A549 (cell line): ENCODE measurements at regions of chr11 and their contacts with region 1.

Region 1: DNA sequence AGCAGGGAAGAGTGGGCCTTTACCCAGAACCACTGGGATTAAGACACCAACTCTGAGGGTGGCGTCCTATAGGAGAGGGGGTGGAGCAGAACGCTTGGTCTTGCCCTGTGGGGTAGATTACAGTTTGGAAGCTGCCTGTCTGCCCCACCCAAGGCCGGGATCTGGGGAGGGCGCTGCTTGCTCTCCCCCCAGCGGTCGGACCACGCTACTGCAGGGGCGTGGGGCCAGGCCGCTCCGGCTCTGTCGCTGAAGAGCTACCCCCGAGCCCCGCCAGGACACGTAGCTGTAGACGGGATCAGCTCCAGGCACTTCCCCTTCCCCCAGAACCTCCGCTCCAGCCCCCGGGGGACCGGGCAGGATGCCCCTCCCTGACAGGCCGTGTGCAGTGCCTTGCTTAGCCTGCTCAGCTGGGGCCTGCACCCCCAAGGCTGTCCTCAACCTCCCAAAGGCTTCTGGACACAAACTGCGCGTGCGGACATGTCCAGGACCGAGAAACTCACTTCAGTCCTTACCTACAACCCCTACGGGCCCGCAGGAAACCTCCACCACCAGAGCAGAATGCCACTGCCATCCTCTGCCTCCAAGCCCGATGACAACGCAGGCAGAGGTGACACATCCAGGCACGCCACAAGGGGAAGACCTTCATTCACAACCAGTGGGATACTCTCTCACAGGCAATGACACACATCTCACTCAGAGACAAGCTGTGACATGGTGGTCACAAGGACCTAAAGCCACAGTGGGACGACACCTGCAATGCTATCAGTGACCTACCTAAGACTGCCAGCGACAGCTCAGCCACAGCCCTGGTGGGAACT is 3.6 kb downstream of the AHNAK start:
- DNase-seq: peak; percentile 72 to 82
- ATAC-seq: peak; percentile 11 to 46; a peak in 5 of 6 replicates
- H3K4me3 ChIP-seq: peak overlapping the region; percentile 96
- H3K27ac ChIP-seq: peak overlapping the region; percentile 97 to 98
- H3K4me1 ChIP-seq: peaks cover 75% of the 10 kb centered on the region
- CTCF ChIP-seq: peak; percentile 87
- EP300 ChIP-seq: no peak
- POLR2A ChIP-seq: no peak
- RAD21 ChIP-seq: peak; percentile 92 to 95

Region 2: GRCh38 chr11:62315431-62315830 is 227.5 kb before region 1 on chr11:
- CTCF ChIA-PET with region 1: no interaction called
- POLR2A ChIA-PET with region 1: no interaction called
- DNase-seq: no peak
- ATAC-seq: no peak
- H3K4me3 ChIP-seq: no peak overlapping the region
- H3K27ac ChIP-seq: no peak overlapping the region
- H3K4me1 ChIP-seq: no peaks in the 10 kb centered on the region
- CTCF ChIP-seq: no peak
- EP300 ChIP-seq: no peak
- POLR2A ChIP-seq: no peak
- RAD21 ChIP-seq: no peak

Region 3: GRCh38 chr11:62435846-62436660 is 106.9 kb before region 1 on chr11:
- CTCF ChIA-PET with region 1: interaction called, 14 read pairs
- POLR2A ChIA-PET with region 1: no interaction called
- DNase-seq: no peak
- ATAC-seq: no peak
- H3K4me3 ChIP-seq: no peak overlapping the region
- H3K27ac ChIP-seq: no peak overlapping the region
- H3K4me1 ChIP-seq: peaks cover 33% of the 10 kb centered on the region
- CTCF ChIP-seq: no peak
- EP300 ChIP-seq: no peak
- POLR2A ChIP-seq: no peak
- RAD21 ChIP-seq: no peak

Region 4: GRCh38 chr11:62461740-62462507 is 81.0 kb before region 1 on chr11:
- CTCF ChIA-PET with region 1: interaction called, 22 read pairs
- POLR2A ChIA-PET with region 1: no interaction called
- DNase-seq: peak in 1 of 2 experiments; percentile 38
- ATAC-seq: peak; percentile 23 to 44; a peak in 3 of 6 replicates
- H3K4me3 ChIP-seq: no peak overlapping the region
- H3K27ac ChIP-seq: peak overlapping the region in 1 of 2 experiments; percentile 43; a peak in 3 of 6 replicates
- H3K4me1 ChIP-seq: peaks cover 27% of the 10 kb centered on the region
- CTCF ChIP-seq: no peak
- EP300 ChIP-seq: no peak
- POLR2A ChIP-seq: no peak
- RAD21 ChIP-seq: no peak

Region 5: DNA sequence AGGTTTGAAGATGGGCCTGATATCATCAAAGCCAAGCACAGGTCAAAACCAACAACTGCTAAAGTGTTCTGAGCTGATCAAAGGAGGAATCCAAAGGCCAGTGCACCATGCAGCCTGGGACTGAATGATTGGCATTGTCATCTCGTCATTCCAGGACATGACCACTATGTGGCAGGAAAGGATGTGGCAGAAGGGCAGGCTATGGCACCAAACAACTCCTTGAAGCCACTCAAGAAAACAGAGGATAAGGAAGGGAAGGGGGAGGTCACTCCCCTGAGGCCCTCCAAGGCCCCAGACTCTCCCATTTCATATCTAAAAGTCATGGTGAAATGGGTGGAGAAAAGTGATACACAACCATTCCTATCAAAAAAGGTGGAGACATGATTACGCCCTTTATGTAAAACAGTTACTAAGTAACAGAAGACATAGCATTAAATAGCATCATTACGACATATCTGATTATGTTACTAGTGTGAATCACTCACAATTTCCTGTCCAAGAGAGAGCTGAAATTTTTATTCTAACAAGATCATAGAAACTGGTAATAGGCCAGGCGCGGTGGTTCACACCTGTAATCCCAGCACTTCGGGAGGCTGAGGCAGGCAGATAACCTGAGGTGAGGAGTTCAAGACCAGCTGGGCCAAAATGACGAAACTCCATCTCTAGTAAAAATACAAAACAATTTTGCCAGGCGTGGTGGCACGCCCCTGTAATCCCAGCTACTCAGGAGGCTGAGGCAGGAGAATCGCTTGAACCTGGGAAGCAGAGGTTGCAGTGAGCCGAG is 45.6 kb before region 1 on chr11:
- CTCF ChIA-PET with region 1: interaction called, 143 read pairs
- POLR2A ChIA-PET with region 1: interaction called, 4 read pairs
- DNase-seq: peak; percentile 75 to 85
- ATAC-seq: peak; percentile 91 to 96
- H3K4me3 ChIP-seq: no peak overlapping the region
- H3K27ac ChIP-seq: peak overlapping the region; percentile 21 to 65; a peak in 4 of 6 replicates
- H3K4me1 ChIP-seq: peaks cover 29% of the 10 kb centered on the region
- CTCF ChIP-seq: peak; percentile 71
- EP300 ChIP-seq: no peak
- POLR2A ChIP-seq: no peak
- RAD21 ChIP-seq: peak; percentile 82 to 84

Region 6: DNA sequence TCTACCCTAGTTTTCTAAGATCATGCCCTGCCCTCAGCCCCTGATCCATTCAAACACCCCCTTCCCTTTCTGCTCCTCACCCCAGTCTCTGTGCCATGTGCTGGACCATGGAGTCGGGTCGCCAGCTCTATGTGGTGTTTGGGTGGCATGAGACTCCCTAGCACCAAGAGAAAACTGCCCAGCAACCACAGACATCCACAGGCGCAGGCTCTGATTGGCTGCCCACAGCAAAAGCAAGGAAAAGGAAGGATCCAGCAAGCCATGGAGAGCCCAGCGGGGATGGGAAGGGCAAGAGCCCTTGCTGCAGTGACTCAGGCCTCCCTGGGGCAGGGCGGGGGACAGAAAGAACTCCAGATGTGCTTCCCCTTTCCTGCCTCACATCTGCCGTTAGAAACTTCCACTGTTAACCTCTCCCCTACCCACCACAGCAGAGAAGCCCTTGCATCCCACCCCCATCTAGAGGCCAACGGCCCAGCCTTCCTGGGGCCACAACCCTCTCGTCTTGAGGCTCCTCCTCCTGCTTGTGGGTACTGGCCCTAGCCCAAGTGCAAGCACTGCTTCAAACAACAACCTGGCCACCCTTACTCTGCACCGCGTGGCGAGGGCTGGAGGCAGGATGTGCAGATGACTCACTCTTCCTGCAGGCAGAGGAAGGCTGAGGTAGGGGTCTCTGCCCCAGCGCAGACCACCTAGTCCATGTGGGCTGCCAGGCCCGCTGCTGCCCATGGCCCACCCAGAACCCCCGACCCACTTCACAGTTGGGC is 13.3 kb after region 1 on chr11:
- CTCF ChIA-PET with region 1: interaction called, 296 read pairs
- POLR2A ChIA-PET with region 1: interaction called, 6 read pairs
- DNase-seq: peak; percentile 95 to 99
- ATAC-seq: peak; percentile 55 to 76
- H3K4me3 ChIP-seq: peak overlapping the region; percentile 4; the same call in 1 of the 3 replicates
- H3K27ac ChIP-seq: peak overlapping the region; percentile 90 to 94
- H3K4me1 ChIP-seq: peaks cover 96% of the 10 kb centered on the region
- CTCF ChIP-seq: no peak
- EP300 ChIP-seq: no peak
- POLR2A ChIP-seq: no peak
- RAD21 ChIP-seq: peak in 1 of 2 experiments; percentile 10; a peak in 1 of 5 replicates

Region 7: GRCh38 chr11:62678770-62679696 is 136.1 kb after region 1 on chr11 and contains the start of gene UBXN1:
- CTCF ChIA-PET with region 1: no interaction called
- POLR2A ChIA-PET with region 1: no interaction called
- DNase-seq: peak; percentile 87 to 92
- ATAC-seq: peak; percentile 84 to 86
- H3K4me3 ChIP-seq: peak within 1 kb of the TSS; percentile 67
- H3K27ac ChIP-seq: peak within 1 kb of the TSS; percentile 87 to 92
- H3K4me1 ChIP-seq: peaks cover 24% of the 10 kb centered on the region
- CTCF ChIP-seq: no peak
- EP300 ChIP-seq: no peak
- POLR2A ChIP-seq: peak; percentile 57
- RAD21 ChIP-seq: no peak
- polyA plus RNA-seq, gene UBXN1: 56.8 and 120 TPM in 2 replicates

Region 8: DNA sequence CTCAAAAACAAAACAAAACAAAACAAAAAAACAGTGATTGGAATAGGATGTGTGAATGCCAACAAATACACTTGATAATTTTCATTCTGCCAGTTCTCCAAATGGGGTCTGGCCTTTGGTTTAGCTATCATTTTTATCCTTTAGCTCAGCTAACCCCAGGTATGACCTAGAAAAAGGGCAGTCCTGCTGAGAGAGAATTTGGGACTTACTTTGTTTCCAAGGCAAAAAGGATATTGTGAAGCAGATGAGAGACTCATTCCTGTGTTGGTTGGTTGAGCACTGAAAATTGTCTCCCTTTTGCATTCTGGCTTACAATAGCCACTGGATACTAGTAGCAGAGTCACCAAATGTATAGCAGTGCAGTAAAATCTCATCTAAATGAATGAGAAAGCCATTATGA is 194.2 kb after region 1 on chr11:
- CTCF ChIA-PET with region 1: no interaction called
- POLR2A ChIA-PET with region 1: no interaction called
- DNase-seq: no peak
- ATAC-seq: no peak
- H3K4me3 ChIP-seq: no peak overlapping the region
- H3K27ac ChIP-seq: no peak overlapping the region
- H3K4me1 ChIP-seq: peaks cover 5% of the 10 kb centered on the region; the same call in 2 of the 3 replicates
- CTCF ChIP-seq: no peak
- EP300 ChIP-seq: no peak
- POLR2A ChIP-seq: no peak
- RAD21 ChIP-seq: no peak